ENCODE measurements at regions of chr17 and their contacts with region 1.

Region 1: GRCh38 chr17:76091526-76092285 is 11.9 kb downstream of the EXOC7 start:
- DNase-seq: no peak
- ATAC-seq: no peak
- H3K4me3 ChIP-seq: no peak overlapping the region
- H3K27ac ChIP-seq: no peak overlapping the region
- H3K4me1 ChIP-seq: peaks cover 0 to 7% (median 0%) of the 10 kb centered on the region in 12 donors
- H3K27me3 ChIP-seq: no peaks in the 10 kb centered on the region
- CTCF ChIP-seq: no peak
- POLR2A ChIP-seq: no peak

Region 2: GRCh38 chr17:76072148-76072858 is 19.4 kb before region 1 on chr17 and contains the start of gene SRP68:
- intact Hi-C with region 1: loop called in 1 of 10 experiments (anchors 2 kb)
- DNase-seq: peak; percentile 92 to 96 (median 94)
- ATAC-seq: peak; percentile 98 to 100 (median 100)
- H3K4me3 ChIP-seq: peak within 1 kb of the TSS; percentile 56 to 93 (median 80)
- H3K27ac ChIP-seq: peak within 1 kb of the TSS in 11 of 12 donors; percentile 37 to 83 (median 69)
- H3K4me1 ChIP-seq: peaks cover 3 to 59% (median 40%) of the 10 kb centered on the region in 12 donors
- H3K27me3 ChIP-seq: peaks cover 25 to 40% (median 39%) of the 10 kb centered on the region in 9 donors
- CTCF ChIP-seq: peak in 1 of 12 donors; percentile 26
- POLR2A ChIP-seq: peak in 1 of 2 donors; percentile 55
- total RNA-seq, gene SRP68: 33.2 to 66.8 (median 59.4) TPM